ENCODE measurements at regions of chr13 and their contacts with region 1.

Region 1: GRCh38 chr13:67238277-67238859 is 8.2 kb upstream of the PCDH9 start:
- DNase-seq: peak; percentile 60
- H3K4me3 ChIP-seq: no peak overlapping the region
- H3K27ac ChIP-seq: no peak overlapping the region
- H3K4me1 ChIP-seq: peaks cover 6% of the 10 kb centered on the region
- CTCF ChIP-seq: peak; percentile 94

Region 2: DNA sequence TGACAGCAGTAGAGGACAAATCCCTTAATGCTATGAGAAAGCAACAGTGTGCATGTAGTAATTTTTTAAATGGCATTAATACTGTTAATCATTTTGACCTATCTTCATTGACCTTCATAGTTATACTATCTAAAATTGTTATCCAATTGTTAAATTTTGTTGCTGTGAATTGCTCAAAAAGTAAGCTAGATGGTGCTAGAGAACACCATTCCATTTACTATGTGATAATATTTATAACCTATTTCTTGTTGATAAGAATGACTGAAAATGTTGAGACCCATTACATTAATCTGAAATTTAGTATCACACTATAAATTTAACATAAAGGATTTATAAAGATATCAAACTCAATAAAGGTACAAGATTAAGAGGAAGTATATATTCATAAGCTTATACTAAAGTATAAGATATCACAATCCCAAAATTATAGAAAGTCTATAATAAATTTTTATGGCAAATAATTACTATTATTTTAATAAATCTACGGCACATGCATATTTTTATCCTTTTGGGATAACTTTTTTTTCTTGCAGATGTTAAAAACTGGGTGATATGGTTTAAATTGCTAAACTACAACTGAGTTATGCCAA is 1581.5 kb before region 1 on chr13:
- CTCF ChIA-PET with region 1: no interaction called
- POLR2A ChIA-PET with region 1: no interaction called
- intact Hi-C with region 1: loop called (anchors 5 kb)
- DNase-seq: peak; percentile 6
- H3K4me3 ChIP-seq: no peak overlapping the region
- H3K27ac ChIP-seq: no peak overlapping the region
- H3K4me1 ChIP-seq: no peaks in the 10 kb centered on the region
- CTCF ChIP-seq: peak; percentile 79

Region 3: DNA sequence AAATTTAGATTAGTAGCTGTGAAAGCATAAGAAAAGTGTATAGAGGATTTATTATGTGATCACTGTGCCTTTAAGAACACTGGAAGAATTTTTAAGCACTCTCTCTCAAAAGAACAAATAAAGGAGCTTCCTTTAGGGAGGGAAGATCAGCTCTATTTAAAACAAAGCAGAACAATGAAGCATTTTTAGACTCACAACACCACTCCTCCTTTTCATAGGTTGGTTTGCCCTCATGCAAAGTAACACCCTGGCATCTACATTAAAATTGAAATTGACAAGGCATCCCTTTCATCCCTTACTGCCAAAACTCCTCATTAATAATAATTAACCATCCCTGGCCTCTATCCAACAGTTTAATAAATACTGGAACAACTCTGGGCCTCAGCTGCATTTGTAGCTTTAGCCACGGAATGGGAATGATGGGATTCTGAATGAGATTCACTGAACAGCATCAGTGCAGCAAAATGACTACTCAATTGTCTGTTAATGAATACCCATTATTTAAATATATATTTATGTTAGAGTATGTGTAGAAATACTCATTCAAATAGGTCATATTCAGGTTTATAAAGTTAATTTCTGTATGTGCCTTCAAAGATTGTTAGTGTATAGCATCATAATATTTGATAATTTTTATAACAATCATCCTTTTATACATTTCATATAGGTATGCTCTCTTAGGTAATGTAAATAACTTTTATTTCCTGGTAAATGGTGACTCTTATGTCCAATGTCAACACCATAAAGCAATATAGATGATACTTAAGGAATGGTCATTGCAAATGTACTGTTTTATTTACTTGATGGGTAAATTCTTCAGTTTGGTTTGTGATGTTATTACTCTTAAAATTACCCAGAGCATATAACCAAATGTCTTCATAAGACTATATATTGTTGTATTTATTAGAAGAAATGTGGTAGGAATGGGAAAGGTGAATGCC is 937.2 kb before region 1 on chr13:
- CTCF ChIA-PET with region 1: no interaction called
- POLR2A ChIA-PET with region 1: no interaction called
- intact Hi-C with region 1: no loop called
- DNase-seq: no peak
- H3K4me3 ChIP-seq: no peak overlapping the region
- H3K27ac ChIP-seq: no peak overlapping the region
- H3K4me1 ChIP-seq: peaks cover 7% of the 10 kb centered on the region
- CTCF ChIP-seq: no peak

Measured in OCI-LY7 (cell line).